Activated naive CD4-positive, alpha-beta T cell treated with anti-CD3 and anti-CD28 coated beads for 36 hours (primary cell): ENCODE measurements at regions of chr1 and their contacts with region 1.

Region 1: GRCh38 chr1:179002552-179003345 is 22.9 kb upstream of the FAM20B start:
- DNase-seq: peak; percentile 77
- H3K4me3 Mint-ChIP-seq: no peak overlapping the region
- H3K27ac Mint-ChIP-seq: peak overlapping the region; percentile 33
- H3K4me1 Mint-ChIP-seq: peaks cover 13% of the 10 kb centered on the region
- H3K27me3 Mint-ChIP-seq: no peaks in the 10 kb centered on the region

Region 2: DNA sequence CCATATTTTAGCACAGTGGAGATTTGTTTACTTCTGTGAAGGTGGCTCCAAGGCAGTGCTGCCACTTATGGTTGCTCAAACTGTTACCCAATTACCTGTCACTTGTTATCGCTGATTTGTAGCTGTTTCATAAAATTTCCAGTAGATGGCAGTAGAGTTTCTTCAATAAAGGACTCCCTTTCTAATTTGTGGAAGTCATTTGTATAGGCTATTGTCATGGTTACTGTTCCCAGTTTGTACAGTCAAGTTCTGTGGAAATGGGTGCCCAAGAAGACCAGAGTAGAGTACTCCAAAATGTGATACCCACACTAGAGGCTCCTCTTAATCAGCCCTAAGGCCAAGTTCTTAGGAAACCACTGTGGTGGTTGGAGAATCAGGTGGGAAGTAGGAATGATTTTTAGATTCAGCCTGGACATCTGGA is 692.1 kb before region 1 on chr1:
- CTCF ChIA-PET with region 1: interaction called, 3 read pairs
- intact Hi-C with region 1: loop called (anchors 5 kb)
- DNase-seq: no peak
- H3K4me3 Mint-ChIP-seq: no peak overlapping the region
- H3K27ac Mint-ChIP-seq: no peak overlapping the region
- H3K4me1 Mint-ChIP-seq: no peaks in the 10 kb centered on the region
- H3K27me3 Mint-ChIP-seq: peaks cover 10% of the 10 kb centered on the region

Region 3: GRCh38 chr1:178542560-178543356 is 460.0 kb before region 1 on chr1:
- CTCF ChIA-PET with region 1: interaction called, 30 read pairs
- intact Hi-C with region 1: loop called (anchors 1 kb)
- DNase-seq: peak; percentile 92
- H3K4me3 Mint-ChIP-seq: peak overlapping the region; percentile 87
- H3K27ac Mint-ChIP-seq: peak overlapping the region; percentile 72
- H3K4me1 Mint-ChIP-seq: peaks cover 4% of the 10 kb centered on the region
- H3K27me3 Mint-ChIP-seq: no peaks in the 10 kb centered on the region

Region 4: DNA sequence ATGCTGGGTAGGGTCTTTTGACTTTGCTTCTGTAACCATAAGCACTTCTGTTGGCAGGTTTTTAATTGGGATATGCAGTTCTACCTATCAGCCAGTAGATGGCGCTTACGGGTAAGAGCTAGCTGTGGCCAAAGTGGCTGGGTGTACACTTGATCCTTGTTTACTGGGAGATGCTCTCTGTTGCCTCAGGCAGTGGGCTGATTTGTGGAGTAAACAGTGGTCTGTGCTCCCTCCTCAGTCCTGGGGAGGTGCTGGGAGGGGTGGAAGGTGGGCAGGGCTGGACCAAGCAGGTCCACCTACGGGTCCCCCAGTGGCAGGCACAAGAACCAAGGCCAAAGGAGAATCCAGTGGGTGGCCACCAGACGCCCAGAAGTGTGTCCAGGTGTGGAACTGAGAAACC is 234.3 kb before region 1 on chr1:
- CTCF ChIA-PET with region 1: interaction called, 71 read pairs
- intact Hi-C with region 1: loop called (anchors 1 kb)
- DNase-seq: peak; percentile 21
- H3K4me3 Mint-ChIP-seq: no peak overlapping the region
- H3K27ac Mint-ChIP-seq: no peak overlapping the region
- H3K4me1 Mint-ChIP-seq: no peaks in the 10 kb centered on the region
- H3K27me3 Mint-ChIP-seq: no peaks in the 10 kb centered on the region

Region 5: DNA sequence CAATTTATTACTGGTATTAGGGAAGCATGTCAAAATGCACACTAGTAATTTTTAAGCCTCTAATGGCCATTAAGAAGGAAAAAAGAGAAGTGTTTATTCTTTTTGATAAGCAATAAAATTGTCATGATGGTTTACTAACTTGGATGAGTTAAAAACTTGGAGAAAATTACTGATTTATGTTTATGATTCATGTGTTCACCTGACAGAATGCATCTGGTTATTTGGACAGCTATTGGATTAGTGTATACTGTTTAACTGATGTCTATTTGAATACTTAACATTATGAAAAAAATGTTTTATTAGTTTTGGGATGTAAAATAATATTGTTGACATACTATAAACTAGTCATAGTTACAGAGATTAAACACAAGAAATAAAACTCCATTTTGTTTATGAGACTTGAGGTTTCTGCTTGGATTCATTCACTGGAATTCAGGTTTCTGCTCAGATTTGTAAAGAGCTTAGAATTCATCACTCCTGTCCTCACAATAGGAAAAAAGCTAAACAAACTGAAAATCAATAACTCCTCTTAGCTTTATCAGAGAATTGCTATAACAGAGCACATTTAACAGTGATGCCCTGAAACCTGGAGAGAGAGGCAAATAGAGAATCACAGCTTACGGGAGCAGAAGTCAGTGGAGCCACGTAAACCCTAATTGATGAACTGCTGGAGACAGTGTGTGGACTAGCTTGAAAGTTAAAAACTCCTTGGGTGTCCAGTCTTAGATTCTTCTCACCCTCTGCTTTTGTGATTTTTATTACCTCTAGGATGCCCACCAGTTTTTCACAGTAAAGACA is 221.0 kb before region 1 on chr1:
- CTCF ChIA-PET with region 1: interaction called, 71 read pairs
- intact Hi-C with region 1: no loop called
- DNase-seq: no peak
- H3K4me3 Mint-ChIP-seq: no peak overlapping the region
- H3K27ac Mint-ChIP-seq: no peak overlapping the region
- H3K4me1 Mint-ChIP-seq: peaks cover 7% of the 10 kb centered on the region
- H3K27me3 Mint-ChIP-seq: no peaks in the 10 kb centered on the region

Region 6: DNA sequence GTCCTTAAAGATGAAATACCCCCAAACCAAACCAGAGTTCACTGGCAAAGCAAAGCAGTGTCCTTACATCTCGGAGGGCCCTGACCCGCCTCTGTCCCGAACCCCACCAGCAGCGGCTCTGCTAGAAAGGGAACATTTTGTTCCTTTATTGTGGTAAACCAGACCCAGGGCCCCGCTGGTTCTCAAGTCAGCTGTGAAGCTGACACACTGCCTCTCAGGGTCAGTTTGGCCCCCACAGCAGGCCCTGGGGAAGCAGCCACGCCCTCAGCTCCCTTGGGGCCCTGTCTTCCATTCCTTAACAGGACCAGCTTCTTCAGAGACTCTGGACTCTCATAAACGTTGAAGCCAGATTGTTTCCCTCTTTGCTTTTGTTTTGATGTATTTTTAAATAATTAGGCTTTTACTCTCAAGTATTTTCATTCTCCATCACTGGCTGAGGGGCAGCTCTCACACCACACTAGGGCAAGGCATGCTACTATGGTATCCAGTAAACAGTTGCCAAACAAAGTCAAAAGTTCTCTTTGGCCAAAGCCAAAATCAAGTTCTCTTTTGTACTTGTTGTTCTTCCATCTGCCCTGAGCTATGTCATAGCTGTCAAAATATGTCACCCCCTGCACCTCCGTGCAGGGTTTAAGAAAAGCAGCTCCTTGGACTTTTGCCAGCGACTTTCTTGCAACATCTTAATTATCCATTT is 70.7 kb before region 1 on chr1:
- CTCF ChIA-PET with region 1: no interaction called
- intact Hi-C with region 1: no loop called
- DNase-seq: no peak
- H3K4me3 Mint-ChIP-seq: no peak overlapping the region
- H3K27ac Mint-ChIP-seq: no peak overlapping the region
- H3K4me1 Mint-ChIP-seq: no peaks in the 10 kb centered on the region
- H3K27me3 Mint-ChIP-seq: peaks cover 3% of the 10 kb centered on the region

Region 7: DNA sequence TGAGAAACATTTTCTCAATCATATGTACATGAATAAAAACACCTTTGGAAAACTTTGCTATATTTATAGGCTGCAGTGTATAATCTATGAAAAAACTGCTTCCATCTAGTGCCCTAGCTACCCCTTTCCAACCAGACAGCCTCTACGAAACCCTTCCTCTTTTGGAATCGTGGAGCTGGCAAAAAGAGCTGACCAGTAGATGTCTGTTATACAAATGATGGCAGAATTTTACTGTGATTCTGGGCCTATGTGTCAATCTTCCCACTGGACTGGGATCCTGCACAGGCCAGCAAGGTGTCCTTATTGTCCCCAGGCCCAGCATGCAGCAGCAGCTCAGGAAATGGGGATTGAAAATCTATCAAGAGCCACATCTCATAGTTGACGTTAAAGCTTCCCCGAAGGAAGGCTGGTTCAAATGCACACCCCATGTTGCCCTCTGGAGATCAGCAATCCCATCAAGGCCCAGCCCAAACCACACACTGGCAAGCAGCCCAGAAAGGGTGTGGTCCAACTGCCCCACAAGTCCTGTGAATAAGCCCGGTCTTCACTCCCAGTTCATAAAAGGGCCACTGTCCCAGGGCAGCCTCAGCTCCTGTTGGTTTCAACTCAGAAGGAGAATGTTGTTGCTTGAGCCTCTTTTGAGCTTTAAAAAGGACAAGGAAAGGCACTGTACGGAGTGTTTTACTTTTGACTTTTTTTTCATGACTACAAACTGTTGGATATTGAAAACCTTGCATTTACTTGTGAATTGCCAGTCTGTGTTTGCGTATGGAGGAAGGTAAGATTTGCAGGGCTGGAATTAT is 14.2 kb after region 1 on chr1:
- CTCF ChIA-PET with region 1: interaction called, 13 read pairs
- intact Hi-C with region 1: no loop called
- DNase-seq: no peak
- H3K4me3 Mint-ChIP-seq: no peak overlapping the region
- H3K27ac Mint-ChIP-seq: no peak overlapping the region
- H3K4me1 Mint-ChIP-seq: no peaks in the 10 kb centered on the region
- H3K27me3 Mint-ChIP-seq: no peaks in the 10 kb centered on the region